ENCODE measurements at regions of chr6 and their contacts with region 1.

Region 1: GRCh38 chr6:111483736-111484632 is 966 bp upstream of the REV3L start:
- DNase-seq: peak; percentile 91 to 98 (median 97)
- H3K4me3 ChIP-seq: peak overlapping the region in 3 of 4 donors; percentile 53 to 96 (median 81)
- H3K27ac ChIP-seq: peak overlapping the region; percentile 97 to 99 (median 99)
- H3K4me1 ChIP-seq: peaks cover 12 to 42% of the 10 kb centered on the region in 2 donors
- H3K27me3 ChIP-seq: no peaks in the 10 kb centered on the region
- CTCF ChIP-seq: peak in 2 of 6 experiments; percentile 15
- POLR2A ChIP-seq: peak; percentile 81 to 92

Region 2: GRCh38 chr6:111541026-111541681 is 57.2 kb after region 1 on chr6:
- intact Hi-C with region 1: loop called in 1 of 2 experiments (anchors 10 kb)
- DNase-seq: no peak
- H3K4me3 ChIP-seq: no peak overlapping the region
- H3K27ac ChIP-seq: peak overlapping the region in 1 of 5 donors; percentile 46
- H3K4me1 ChIP-seq: peaks cover 4 to 19% of the 10 kb centered on the region in 2 donors
- H3K27me3 ChIP-seq: no peaks in the 10 kb centered on the region
- CTCF ChIP-seq: no peak
- POLR2A ChIP-seq: no peak

Measured in adrenal gland (tissue), 19 donors.